PC-3 (cell line): ENCODE measurements at regions of chr14 and their contacts with region 1.

Region 1: DNA sequence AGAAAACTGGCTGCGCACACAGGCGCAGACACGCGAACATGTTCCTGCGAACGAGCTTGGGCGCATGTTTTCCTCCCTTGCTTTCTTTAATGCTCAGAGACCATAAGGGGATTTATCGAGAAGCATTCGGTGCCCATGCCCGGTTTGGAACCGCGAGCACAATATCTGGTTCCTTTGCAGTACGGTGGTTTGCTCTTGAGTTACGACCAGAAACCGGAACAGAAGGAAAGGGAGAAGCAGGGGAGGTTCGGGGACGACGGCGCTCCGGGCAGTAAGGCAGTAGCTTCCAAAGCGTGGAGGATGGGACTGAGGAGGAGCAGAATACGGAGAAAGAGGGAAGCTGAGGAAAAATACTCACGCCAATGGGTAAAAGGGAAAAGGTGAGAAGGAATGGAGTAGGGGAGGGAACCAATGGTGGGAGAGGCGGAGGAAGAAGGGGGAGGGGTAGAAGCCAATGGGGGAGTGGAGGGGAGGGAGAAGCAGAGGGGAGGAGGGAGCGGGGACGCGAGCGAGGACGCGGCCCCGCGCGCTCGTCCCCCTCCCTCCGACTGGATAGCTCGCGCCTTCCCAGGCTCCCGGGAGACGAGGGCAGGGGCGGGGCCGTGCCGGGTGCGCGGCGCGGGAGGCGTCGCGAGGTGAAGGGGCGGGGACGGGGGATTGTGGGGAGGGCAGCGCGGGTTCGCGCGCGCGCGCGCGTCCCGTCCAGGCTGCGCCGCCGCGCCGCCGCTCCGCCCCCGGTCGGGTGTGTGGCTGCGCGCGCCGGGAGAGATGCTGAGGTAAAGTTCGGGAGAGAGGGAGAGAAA is 625 bp upstream of the ARHGAP5 start:
- DNase-seq: peak; percentile 97
- ATAC-seq: peak; percentile 77
- H3K4me3 ChIP-seq: peak overlapping the region; percentile 93
- H3K27ac ChIP-seq: peak overlapping the region; percentile 90
- H3K4me1 ChIP-seq: peaks cover 32% of the 10 kb centered on the region
- H3K27me3 ChIP-seq: no peaks in the 10 kb centered on the region
- CTCF ChIP-seq: no peak

Region 2: GRCh38 chr14:31263485-31264133 is 812.9 kb before region 1 on chr14:
- CTCF ChIA-PET with region 1: no interaction called
- POLR2A ChIA-PET with region 1: interaction called, 24 read pairs
- intact Hi-C with region 1: no loop called
- DNase-seq: peak; percentile 97
- ATAC-seq: peak; percentile 99
- H3K4me3 ChIP-seq: no peak overlapping the region
- H3K27ac ChIP-seq: peak overlapping the region; percentile 51
- H3K4me1 ChIP-seq: peaks cover 44% of the 10 kb centered on the region
- H3K27me3 ChIP-seq: no peaks in the 10 kb centered on the region
- CTCF ChIP-seq: no peak

Region 3: DNA sequence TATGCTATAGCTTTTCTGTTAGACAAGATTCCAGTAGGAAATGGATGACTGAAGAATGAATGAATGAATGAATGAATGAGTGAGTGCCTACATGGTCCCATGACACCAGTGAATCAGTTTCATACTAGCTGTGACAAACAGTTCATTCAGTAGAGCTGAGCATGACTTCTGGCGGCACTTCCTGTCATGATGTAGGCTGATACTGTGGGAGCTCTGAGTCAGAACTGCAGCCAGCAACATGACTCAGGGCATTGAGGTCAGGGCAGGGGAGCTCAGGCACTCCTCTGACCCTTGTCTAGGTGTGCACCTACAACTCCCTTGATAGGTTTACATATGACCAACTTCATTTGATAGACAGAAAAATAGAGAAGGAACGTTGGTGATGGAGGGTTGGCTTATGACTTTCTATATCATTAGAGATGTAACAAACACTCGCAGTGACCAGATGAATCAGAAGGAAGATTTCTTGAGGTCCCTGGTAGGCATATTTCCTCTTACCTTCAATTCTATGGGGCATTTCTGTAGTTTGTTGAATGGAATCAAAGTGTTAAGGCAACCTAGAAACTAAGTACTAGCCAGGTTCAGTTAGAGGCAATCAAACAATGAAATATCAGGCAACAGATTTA is 138.6 kb before region 1 on chr14:
- CTCF ChIA-PET with region 1: interaction called, 4 read pairs
- POLR2A ChIA-PET with region 1: interaction called, 5 read pairs
- intact Hi-C with region 1: loop called (anchors 1 kb)
- DNase-seq: peak; percentile 94
- ATAC-seq: peak; percentile 92
- H3K4me3 ChIP-seq: no peak overlapping the region
- H3K27ac ChIP-seq: peak overlapping the region; percentile 75
- H3K4me1 ChIP-seq: peaks cover 40% of the 10 kb centered on the region
- H3K27me3 ChIP-seq: no peaks in the 10 kb centered on the region
- CTCF ChIP-seq: no peak

Region 4: GRCh38 chr14:32043624-32044023 is 32.9 kb before region 1 on chr14:
- CTCF ChIA-PET with region 1: no interaction called
- POLR2A ChIA-PET with region 1: interaction called, 11 read pairs
- intact Hi-C with region 1: no loop called
- DNase-seq: no peak
- ATAC-seq: no peak
- H3K4me3 ChIP-seq: no peak overlapping the region
- H3K27ac ChIP-seq: no peak overlapping the region
- H3K4me1 ChIP-seq: no peaks in the 10 kb centered on the region
- H3K27me3 ChIP-seq: no peaks in the 10 kb centered on the region
- CTCF ChIP-seq: no peak

Region 5: GRCh38 chr14:32202998-32203882 is 126.8 kb after region 1 on chr14 and contains the start of gene RNU6-8:
- CTCF ChIA-PET with region 1: interaction called, 6 read pairs
- POLR2A ChIA-PET with region 1: interaction called, 3 read pairs
- intact Hi-C with region 1: loop called (anchors 1 kb)
- DNase-seq: peak; percentile 92
- ATAC-seq: peak; percentile 68
- H3K4me3 ChIP-seq: peak within 1 kb of the TSS; percentile 87
- H3K27ac ChIP-seq: peak within 1 kb of the TSS; percentile 65
- H3K4me1 ChIP-seq: peaks cover 21% of the 10 kb centered on the region; the same call in 1 of the 2 replicates
- H3K27me3 ChIP-seq: no peaks in the 10 kb centered on the region
- CTCF ChIP-seq: no peak
- total RNA-seq, gene RNU6-8: not detected in 2 replicates

Region 6: GRCh38 chr14:32370720-32371119 is 294.2 kb after region 1 on chr14:
- CTCF ChIA-PET with region 1: no interaction called
- POLR2A ChIA-PET with region 1: no interaction called
- intact Hi-C with region 1: loop called (anchors 5 kb)
- DNase-seq: peak; percentile 89
- ATAC-seq: peak; percentile 82
- H3K4me3 ChIP-seq: peak overlapping the region; percentile 36; the same call in 1 of the 2 replicates
- H3K27ac ChIP-seq: peak overlapping the region; percentile 81
- H3K4me1 ChIP-seq: peaks cover 59% of the 10 kb centered on the region
- H3K27me3 ChIP-seq: no peaks in the 10 kb centered on the region
- CTCF ChIP-seq: no peak

Region 7: DNA sequence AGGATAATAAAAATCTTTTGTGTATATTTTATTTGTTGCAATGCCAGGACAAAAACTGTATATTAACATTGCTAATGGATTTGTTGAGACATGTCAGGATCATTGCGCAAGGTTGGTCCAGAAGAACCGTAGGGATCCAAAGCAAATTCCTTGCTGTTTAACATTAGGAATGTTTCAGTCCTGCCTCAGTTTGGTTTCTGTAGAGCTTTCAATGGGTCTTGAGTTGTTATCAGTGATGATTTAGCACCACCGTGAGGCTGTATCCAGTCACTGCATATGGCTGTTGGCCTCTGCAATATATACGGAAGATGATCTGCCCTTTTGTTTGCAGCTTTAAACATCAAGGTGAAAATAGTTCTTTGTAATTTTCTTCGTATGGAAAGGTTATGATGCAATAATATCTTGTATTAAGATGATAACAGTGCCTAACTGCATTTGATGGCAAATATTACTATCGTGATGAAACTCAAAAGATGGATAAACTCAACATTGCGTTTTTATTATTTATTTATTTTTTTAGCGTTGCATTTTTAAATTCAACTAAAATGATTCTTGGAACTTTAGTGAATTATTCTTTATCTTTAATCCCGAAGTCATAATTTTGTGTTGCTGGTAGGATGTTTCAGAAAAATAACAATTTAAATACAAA is 483.9 kb after region 1 on chr14:
- CTCF ChIA-PET with region 1: no interaction called
- POLR2A ChIA-PET with region 1: no interaction called
- intact Hi-C with region 1: loop called (anchors 1 kb)
- DNase-seq: peak; percentile 84
- ATAC-seq: peak; percentile 61
- H3K4me3 ChIP-seq: no peak overlapping the region
- H3K27ac ChIP-seq: no peak overlapping the region
- H3K4me1 ChIP-seq: peaks cover 30% of the 10 kb centered on the region
- H3K27me3 ChIP-seq: no peaks in the 10 kb centered on the region
- CTCF ChIP-seq: peak; percentile 97